Mammary epithelial cell (primary cell): ENCODE measurements at regions of chr4 and their contacts with region 1.

Region 1: GRCh38 chr4:184310171-184310567 is 92.5 kb upstream of the ENPP6 start:
- DNase-seq: no peak
- H3K4me3 ChIP-seq: no peak overlapping the region
- H3K27ac ChIP-seq: no peak overlapping the region
- H3K4me1 ChIP-seq: peaks cover 5% of the 10 kb centered on the region
- H3K27me3 ChIP-seq: no peaks in the 10 kb centered on the region
- CTCF ChIP-seq: peak in 1 of 2 donors; percentile 8

Region 2: GRCh38 chr4:184275766-184276165 is 34.4 kb before region 1 on chr4:
- CTCF ChIA-PET with region 1: no interaction called
- dilution Hi-C with region 1: loop called (anchors 5 kb)
- in situ Hi-C with region 1: no loop called
- intact Hi-C with region 1: no loop called
- DNase-seq: peak; percentile 47
- H3K4me3 ChIP-seq: no peak overlapping the region
- H3K27ac ChIP-seq: no peak overlapping the region
- H3K4me1 ChIP-seq: no peaks in the 10 kb centered on the region
- H3K27me3 ChIP-seq: no peaks in the 10 kb centered on the region
- CTCF ChIP-seq: no peak

Region 3: GRCh38 chr4:184370711-184371389 is 60.7 kb after region 1 on chr4:
- CTCF ChIA-PET with region 1: no interaction called
- dilution Hi-C with region 1: loop called (anchors 5 kb)
- in situ Hi-C with region 1: no loop called
- intact Hi-C with region 1: no loop called
- DNase-seq: no peak
- H3K4me3 ChIP-seq: no peak overlapping the region
- H3K27ac ChIP-seq: no peak overlapping the region
- H3K4me1 ChIP-seq: no peaks in the 10 kb centered on the region
- H3K27me3 ChIP-seq: no peaks in the 10 kb centered on the region
- CTCF ChIP-seq: no peak

Region 4: GRCh38 chr4:184722798-184723197 is 412.6 kb after region 1 on chr4:
- CTCF ChIA-PET with region 1: no interaction called
- dilution Hi-C with region 1: no loop called
- in situ Hi-C with region 1: no loop called
- intact Hi-C with region 1: no loop called
- DNase-seq: no peak
- H3K4me3 ChIP-seq: no peak overlapping the region
- H3K27ac ChIP-seq: no peak overlapping the region
- H3K4me1 ChIP-seq: no peaks in the 10 kb centered on the region
- H3K27me3 ChIP-seq: no peaks in the 10 kb centered on the region
- CTCF ChIP-seq: no peak